ENCODE measurements at regions of chr5 and their contacts with region 1.

Region 1: GRCh38 chr5:113606298-113607134 is 93.0 kb downstream of the YTHDC2 start:
- DNase-seq: no peak
- H3K4me3 ChIP-seq: peak overlapping the region in 3 of 8 donors; percentile 12 to 52 (median 14)
- H3K27ac ChIP-seq: no peak overlapping the region
- H3K4me1 ChIP-seq: peaks cover 0 to 11% (median 0%) of the 10 kb centered on the region in 6 donors
- H3K27me3 ChIP-seq: peaks cover 0 to 23% (median 0%) of the 10 kb centered on the region in 7 donors
- CTCF ChIP-seq: peak; percentile 51 to 85 (median 74)
- POLR2A ChIP-seq: no peak

Region 2: GRCh38 chr5:113005454-113005853 is 601.1 kb before region 1 on chr5:
- intact Hi-C with region 1: loop called (anchors 10 kb)
- DNase-seq: no peak
- H3K4me3 ChIP-seq: no peak overlapping the region
- H3K27ac ChIP-seq: no peak overlapping the region
- H3K4me1 ChIP-seq: peaks cover 0 to 6% (median 0%) of the 10 kb centered on the region in 6 donors
- H3K27me3 ChIP-seq: no peaks in the 10 kb centered on the region
- CTCF ChIP-seq: no peak
- POLR2A ChIP-seq: no peak

Region 3: DNA sequence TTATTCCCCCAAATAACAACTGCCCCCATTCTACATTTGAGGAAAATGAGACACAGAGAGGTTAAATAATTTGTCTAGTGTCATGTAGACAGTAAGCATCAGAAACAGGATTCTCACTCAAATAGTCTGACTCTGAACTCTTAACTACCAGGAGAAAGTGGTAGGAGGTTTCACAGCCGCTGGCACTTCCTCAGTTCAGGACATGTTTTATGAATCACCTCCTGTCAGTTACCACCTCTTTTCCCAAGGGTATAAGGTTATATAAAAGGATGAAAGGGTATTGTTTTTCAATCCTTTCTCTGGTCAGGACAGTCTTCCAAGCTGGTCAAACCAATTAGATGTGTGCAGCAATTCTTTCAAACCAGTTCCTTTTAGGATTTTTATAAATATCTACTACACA is 223.8 kb before region 1 on chr5:
- intact Hi-C with region 1: loop called (anchors 10 kb)
- DNase-seq: no peak
- H3K4me3 ChIP-seq: no peak overlapping the region
- H3K27ac ChIP-seq: no peak overlapping the region
- H3K4me1 ChIP-seq: peaks cover 11 to 17% (median 14%) of the 10 kb centered on the region in 6 donors
- H3K27me3 ChIP-seq: peaks cover 0 to 35% (median 0%) of the 10 kb centered on the region in 7 donors
- CTCF ChIP-seq: no peak
- POLR2A ChIP-seq: no peak

Measured in spleen (tissue), 13 donors.